ENCODE measurements at regions of chr5 and their contacts with region 1.

Region 1: DNA sequence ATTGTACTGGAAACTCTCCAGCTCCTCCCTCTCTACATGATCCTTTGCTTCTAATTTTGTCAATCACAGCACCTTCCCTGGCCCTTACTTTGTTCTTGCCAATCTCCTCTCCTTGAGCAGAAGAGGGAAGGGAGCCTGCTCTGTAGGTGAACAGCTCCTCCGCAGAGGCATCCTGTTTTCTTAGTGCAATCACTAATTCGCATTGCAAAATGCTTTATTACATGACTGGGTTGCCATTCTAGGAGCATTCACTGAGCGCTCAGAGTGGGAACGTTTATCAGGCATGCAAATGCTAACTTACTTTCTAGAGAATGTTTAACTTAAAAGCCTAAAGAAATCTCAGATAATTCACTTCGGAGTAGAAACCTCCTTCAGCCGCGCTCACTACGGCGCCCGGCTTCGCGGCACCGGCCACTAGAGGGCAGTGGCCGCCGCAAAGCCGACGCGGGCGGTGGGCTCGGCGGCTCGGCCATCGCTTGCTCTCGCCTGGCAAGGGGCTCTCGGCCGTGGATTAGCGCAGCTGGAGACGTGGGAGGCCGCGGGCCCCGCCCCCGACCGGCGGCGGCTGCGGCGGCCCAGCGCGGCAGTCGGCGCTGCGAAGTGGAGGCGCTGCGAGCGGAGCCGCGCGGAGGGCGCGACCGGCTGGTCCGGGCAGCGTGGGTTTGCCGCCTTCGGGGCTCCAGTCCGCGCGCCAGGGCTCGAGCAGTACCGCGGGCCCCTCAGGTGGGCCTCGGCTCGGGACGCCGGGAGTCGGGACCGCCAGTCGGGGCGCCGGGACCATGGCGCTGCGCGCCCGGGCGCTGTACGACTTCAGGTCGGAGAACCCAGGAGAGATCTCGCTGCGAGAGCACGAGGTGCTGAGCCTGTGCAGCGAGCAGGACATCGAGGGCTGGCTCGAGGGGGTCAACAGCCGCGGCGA is at the start of gene SNX18:
- DNase-seq: peak; percentile 89 to 99 (median 94)
- ATAC-seq: peak; percentile 94
- H3K4me3 ChIP-seq: peak within 1 kb of the TSS; percentile 95 to 97
- H3K27ac ChIP-seq: peak within 1 kb of the TSS; percentile 97
- H3K4me1 ChIP-seq: peaks cover 25 to 37% of the 10 kb centered on the region in 2 donors
- H3K27me3 ChIP-seq: no peaks in the 10 kb centered on the region
- CTCF ChIP-seq: peak; percentile 97
- polyA plus RNA-seq, gene SNX18: 15.3 to 23.1 (median 19.3) TPM

Region 2: GRCh38 chr5:54844905-54845566 is 327.6 kb after region 1 on chr5:
- intact Hi-C with region 1: loop called (anchors 5 to 10 kb)
- DNase-seq: peak in 2 of 4 donors; percentile 53 to 60
- ATAC-seq: peak; percentile 54
- H3K4me3 ChIP-seq: peak overlapping the region in 1 of 2 donors; percentile 2
- H3K27ac ChIP-seq: peak overlapping the region in 1 of 2 donors; percentile 26
- H3K4me1 ChIP-seq: peaks cover 0 to 12% of the 10 kb centered on the region in 2 donors
- H3K27me3 ChIP-seq: no peaks in the 10 kb centered on the region
- CTCF ChIP-seq: peak; percentile 70 to 71

Region 3: GRCh38 chr5:54867310-54867944 is 350.0 kb after region 1 on chr5:
- intact Hi-C with region 1: loop called in 1 of 2 experiments (anchors 5 kb)
- DNase-seq: peak in 2 of 4 donors; percentile 53 to 71
- ATAC-seq: peak; percentile 83
- H3K4me3 ChIP-seq: no peak overlapping the region
- H3K27ac ChIP-seq: no peak overlapping the region
- H3K4me1 ChIP-seq: peaks cover 0 to 7% of the 10 kb centered on the region in 2 donors
- H3K27me3 ChIP-seq: no peaks in the 10 kb centered on the region
- CTCF ChIP-seq: peak; percentile 57 to 81

Measured in left lung (tissue), 14 donors.